ENCODE measurements at regions of chr10 and their contacts with region 1.

Region 1: DNA sequence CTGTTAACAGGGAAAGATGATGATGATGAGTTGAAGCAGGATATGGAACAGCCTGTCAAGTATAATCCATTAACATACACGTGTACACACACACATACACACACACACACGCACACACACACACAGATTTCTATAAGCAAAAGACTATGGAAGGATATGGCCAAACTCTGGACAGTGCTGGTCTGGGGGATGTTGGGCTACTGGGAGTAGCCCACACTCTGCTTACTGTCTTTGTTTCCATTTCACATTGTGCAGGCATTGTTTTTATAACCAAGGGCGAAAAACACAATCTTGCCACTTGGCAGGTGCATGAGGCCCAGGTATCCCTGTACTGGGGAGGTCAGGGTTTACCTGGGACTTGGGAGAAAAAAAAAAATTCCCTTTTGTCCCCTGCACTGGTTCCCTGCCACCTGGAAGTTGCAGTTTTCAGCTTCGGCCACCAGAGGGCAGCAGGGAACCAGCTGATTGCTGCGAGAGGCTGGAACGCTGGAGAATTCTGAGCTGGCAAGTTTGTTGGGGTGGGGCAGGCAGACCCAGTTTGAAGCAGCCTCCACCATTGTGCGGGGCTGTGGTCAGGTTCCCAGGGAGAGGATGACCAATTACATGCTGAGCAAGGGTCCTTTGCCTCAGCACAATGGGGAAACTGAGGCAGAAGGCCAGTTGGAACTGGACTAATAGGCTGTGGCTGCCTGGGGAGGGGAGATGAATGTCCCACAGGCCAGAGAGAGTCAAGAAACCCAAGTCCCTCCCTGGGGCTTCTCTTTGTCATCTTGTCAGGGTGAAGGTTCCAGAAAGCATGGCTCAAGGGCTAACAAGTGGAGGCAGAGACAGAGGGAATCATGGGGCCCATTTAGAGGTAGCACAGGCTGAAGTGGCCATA is 27.3 kb downstream of the PPIF start:
- DNase-seq: peak; percentile 81 to 85
- H3K4me3 ChIP-seq: no peak overlapping the region
- H3K27ac ChIP-seq: no peak overlapping the region
- H3K4me1 ChIP-seq: peaks cover 6 to 11% of the 10 kb centered on the region in 2 donors
- H3K27me3 ChIP-seq: no peaks in the 10 kb centered on the region
- CTCF ChIP-seq: peak; percentile 90 to 97 (median 96)
- POLR2A ChIP-seq: no peak

Region 2: DNA sequence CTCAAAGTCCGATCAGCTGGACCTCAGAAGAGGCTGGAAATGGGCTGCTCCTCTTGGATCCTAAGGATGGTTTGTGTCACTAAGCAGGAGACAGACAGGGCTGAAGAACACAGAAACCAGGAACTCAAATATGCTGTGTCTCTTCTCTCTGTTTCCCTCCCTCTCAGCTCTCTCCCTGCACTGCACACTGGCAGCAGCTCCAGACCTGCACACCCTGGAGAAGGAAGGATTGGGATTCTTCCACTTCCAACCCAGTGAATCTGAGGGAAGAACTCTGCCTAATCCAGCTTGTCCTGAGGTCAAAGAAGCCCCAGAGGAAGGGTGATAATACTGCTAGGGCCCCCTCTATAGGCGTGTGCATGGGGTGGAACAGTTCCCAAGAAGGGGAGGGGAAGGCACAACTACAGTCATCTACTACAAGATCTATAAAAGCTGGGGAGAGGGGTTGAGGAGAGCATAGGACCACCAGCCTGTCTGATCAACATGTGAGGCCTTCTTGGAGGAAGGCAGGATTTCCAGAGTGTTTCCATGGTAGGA is 93.5 kb after region 1 on chr10:
- intact Hi-C with region 1: loop called (anchors 5 kb)
- DNase-seq: no peak
- H3K4me3 ChIP-seq: no peak overlapping the region
- H3K27ac ChIP-seq: peak overlapping the region in 1 of 3 donors; percentile 7
- H3K4me1 ChIP-seq: no peaks in the 10 kb centered on the region
- H3K27me3 ChIP-seq: no peaks in the 10 kb centered on the region
- CTCF ChIP-seq: no peak
- POLR2A ChIP-seq: no peak

Region 3: DNA sequence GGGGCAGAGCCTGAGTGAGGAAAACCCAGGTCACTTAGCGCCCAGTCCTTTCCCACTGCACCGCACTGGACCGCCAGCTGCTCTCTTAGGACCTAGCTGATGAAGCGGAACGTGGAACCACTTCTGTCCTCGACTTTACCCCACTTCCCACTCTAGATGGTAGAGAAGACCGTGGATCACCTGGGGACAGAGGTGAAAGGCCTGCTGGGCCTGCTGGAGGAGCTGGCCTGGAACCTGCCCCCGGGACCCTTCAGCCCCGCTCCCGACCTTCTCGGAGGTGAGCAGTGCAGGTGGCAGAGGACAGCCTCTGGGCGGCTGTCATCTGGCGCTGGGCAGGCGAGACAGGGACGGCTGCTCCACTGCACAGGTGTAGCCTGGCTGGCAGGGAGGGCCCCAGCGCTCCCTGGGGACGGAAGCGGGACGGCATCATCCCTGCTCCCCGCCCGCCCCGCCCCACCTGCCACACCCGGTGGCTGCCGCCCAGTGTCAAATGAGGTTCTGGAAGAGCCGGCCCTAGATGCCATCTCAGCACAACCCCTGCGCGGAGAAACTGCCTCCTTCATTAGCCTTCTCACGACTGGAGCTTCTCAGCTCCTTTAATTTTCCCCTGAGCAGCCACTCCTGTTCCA is 769.6 kb after region 1 on chr10:
- intact Hi-C with region 1: loop called (anchors 10 kb)
- DNase-seq: peak; percentile 34 to 43
- H3K4me3 ChIP-seq: no peak overlapping the region
- H3K27ac ChIP-seq: peak overlapping the region in 1 of 3 donors; percentile 15
- H3K4me1 ChIP-seq: peaks cover 10 to 12% of the 10 kb centered on the region in 2 donors
- H3K27me3 ChIP-seq: no peaks in the 10 kb centered on the region
- CTCF ChIP-seq: peak in 1 of 6 experiments; percentile 42
- POLR2A ChIP-seq: no peak